Motor neuron (in vitro differentiated cells): ENCODE measurements at regions of chr12 and their contacts with region 1.

Region 1: GRCh38 chr12:56998981-56999380 is 7.4 kb downstream of the ZBTB39 start:
- ATAC-seq: no peak
- H3K4me3 ChIP-seq: no peak overlapping the region
- H3K27ac ChIP-seq: no peak overlapping the region
- H3K4me1 ChIP-seq: no peaks in the 10 kb centered on the region

Region 2: GRCh38 chr12:56766535-56766934 is 232.4 kb before region 1 on chr12:
- in situ Hi-C with region 1: loop called in 2 of 9 experiments (anchors 10 to 25 kb)
- ATAC-seq: no peak
- H3K4me3 ChIP-seq: no peak overlapping the region
- H3K27ac ChIP-seq: no peak overlapping the region
- H3K4me1 ChIP-seq: no peaks in the 10 kb centered on the region